ENCODE measurements at regions of chr10 and their contacts with region 1.

Region 1: GRCh38 chr10:31261511-31262311 is 57.3 kb upstream of the ZEB1 start:
- DNase-seq: no peak
- H3K4me3 ChIP-seq: peak overlapping the region; percentile 21 to 41
- H3K27ac ChIP-seq: peak overlapping the region; percentile 67 to 71
- H3K4me1 ChIP-seq: peaks cover 0 to 17% of the 10 kb centered on the region in 2 donors
- H3K27me3 ChIP-seq: no peaks in the 10 kb centered on the region
- CTCF ChIP-seq: no peak

Region 2: DNA sequence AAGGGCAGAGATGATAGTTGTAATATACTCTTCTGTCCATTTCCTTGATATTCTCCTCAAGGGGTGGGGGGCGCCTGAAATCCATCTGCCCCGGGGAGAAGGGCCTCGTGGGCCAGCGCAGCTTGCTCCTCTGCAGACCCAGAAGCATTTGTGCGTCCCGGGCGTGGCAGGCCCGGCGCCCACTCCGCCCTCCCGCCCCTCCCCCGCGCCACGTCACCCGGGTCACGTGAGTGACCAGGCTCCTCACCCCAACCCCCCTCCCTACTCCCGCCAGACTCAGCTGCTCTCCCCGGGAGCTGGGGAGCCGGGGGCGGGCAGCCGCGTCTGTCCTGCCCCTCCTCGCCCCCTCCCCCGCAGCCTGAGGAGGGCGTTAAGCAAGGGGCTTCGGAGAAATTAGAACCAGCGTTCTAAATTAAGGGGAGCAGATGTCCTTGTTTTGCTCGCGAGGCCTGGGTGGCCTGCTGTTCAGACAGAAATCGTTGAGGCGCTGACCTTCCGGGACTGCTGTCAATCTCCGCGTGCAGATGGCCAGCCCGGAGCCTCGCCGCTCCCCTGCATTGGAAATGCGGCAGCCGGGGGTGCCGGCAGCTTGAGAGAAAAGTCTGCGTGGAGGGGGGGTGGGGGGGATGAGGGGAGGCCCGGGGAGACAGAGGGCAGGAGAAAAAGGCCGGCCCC is 127.9 kb before region 1 on chr10:
- intact Hi-C with region 1: loop called (anchors 5 kb)
- DNase-seq: peak; percentile 26 to 89
- H3K4me3 ChIP-seq: peak overlapping the region; percentile 61 to 74
- H3K27ac ChIP-seq: peak overlapping the region; percentile 95 to 96
- H3K4me1 ChIP-seq: peaks cover 3 to 22% of the 10 kb centered on the region in 2 donors
- H3K27me3 ChIP-seq: no peaks in the 10 kb centered on the region
- CTCF ChIP-seq: no peak

Region 3: GRCh38 chr10:31399631-31400030 is 137.9 kb after region 1 on chr10:
- intact Hi-C with region 1: loop called (anchors 5 kb)
- DNase-seq: peak in 1 of 2 donors; percentile 71
- H3K4me3 ChIP-seq: no peak overlapping the region
- H3K27ac ChIP-seq: peak overlapping the region; percentile 51 to 78
- H3K4me1 ChIP-seq: peaks cover 8 to 36% of the 10 kb centered on the region in 2 donors
- H3K27me3 ChIP-seq: no peaks in the 10 kb centered on the region
- CTCF ChIP-seq: no peak

Measured in ascending aorta (tissue), 2 donors.